Activated CD4-positive, alpha-beta T cell treated with anti-CD3 and anti-CD28 coated beads, Interleukin-2, amount 10 ng/mL, durations not matched to agents 24 days and 14 days (primary cell): ENCODE measurements at regions of chr1 and their contacts with region 1.

Region 1: DNA sequence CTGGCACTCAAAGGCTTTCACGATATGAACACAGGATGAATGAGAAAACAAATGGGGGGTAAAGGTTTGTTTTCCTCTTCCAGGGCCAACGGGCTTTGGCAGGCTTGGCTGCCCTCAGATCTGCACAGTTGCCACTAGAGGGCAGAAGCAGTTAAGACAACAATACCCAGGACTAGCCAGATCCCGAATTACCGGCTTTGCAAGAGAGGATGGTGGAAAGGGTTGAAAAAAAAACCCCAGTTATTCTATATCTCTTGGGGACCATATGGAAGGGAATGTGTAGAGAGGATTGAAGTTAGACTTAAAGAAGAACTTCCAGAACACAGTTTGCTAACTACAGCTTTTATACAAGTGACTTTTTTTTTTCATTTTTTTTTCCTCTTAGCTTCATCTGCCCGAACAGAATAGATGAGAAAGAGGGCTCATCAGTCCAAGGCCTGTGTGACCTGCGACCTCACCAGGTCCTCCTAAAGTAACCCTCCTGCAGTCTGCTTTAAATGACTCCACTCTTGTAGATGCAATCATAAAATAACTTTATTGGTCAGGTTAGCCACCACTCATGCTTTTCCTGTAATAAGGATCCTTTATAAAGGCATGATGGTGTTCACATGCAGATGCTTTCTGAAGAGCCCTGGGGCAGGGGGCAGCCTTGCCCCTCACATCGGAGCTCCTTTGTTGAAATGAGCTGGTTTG is 10.7 kb downstream of the FMOD start:
- DNase-seq: peak; percentile 89
- H3K4me3 Mint-ChIP-seq: no peak overlapping the region
- H3K27ac Mint-ChIP-seq: no peak overlapping the region
- H3K4me1 Mint-ChIP-seq: peaks cover 24% of the 10 kb centered on the region
- H3K27me3 Mint-ChIP-seq: peaks cover 38% of the 10 kb centered on the region

Region 2: DNA sequence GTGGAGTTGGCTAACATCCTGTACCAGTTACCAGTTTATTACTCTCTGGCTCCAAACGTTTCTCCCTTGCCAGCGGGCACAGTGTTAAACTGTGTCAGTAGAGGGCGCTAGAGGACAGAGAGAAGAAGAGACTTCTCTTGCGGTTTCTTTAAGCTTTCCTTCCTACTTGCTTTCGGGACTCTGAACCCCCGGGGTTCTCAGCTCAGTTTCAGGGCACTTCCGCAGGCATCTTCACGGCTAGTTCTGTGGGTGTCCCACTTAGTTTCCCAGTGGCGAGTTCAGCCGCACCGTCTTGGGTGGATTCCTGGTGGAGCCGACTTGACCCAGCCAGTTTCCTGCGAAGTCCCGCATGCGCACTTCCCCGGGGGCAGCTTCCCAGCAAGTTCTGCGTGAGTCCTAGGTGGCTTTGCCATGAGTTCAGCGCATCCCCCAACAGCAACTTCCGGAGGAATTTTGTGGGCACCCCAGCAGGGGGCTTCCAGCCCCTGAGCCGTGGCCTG is 72.9 kb before region 1 on chr1:
- intact Hi-C with region 1: loop called (anchors 1 kb)
- DNase-seq: peak; percentile 96
- H3K4me3 Mint-ChIP-seq: peak overlapping the region; percentile 87
- H3K27ac Mint-ChIP-seq: peak overlapping the region; percentile 76
- H3K4me1 Mint-ChIP-seq: peaks cover 18% of the 10 kb centered on the region
- H3K27me3 Mint-ChIP-seq: peaks cover 4% of the 10 kb centered on the region

Region 3: GRCh38 chr1:203273206-203273868 is 66.9 kb before region 1 on chr1:
- intact Hi-C with region 1: loop called (anchors 1 kb)
- DNase-seq: peak; percentile 97
- H3K4me3 Mint-ChIP-seq: peak overlapping the region; percentile 76
- H3K27ac Mint-ChIP-seq: peak overlapping the region; percentile 87
- H3K4me1 Mint-ChIP-seq: peaks cover 57% of the 10 kb centered on the region
- H3K27me3 Mint-ChIP-seq: no peaks in the 10 kb centered on the region

Region 4: DNA sequence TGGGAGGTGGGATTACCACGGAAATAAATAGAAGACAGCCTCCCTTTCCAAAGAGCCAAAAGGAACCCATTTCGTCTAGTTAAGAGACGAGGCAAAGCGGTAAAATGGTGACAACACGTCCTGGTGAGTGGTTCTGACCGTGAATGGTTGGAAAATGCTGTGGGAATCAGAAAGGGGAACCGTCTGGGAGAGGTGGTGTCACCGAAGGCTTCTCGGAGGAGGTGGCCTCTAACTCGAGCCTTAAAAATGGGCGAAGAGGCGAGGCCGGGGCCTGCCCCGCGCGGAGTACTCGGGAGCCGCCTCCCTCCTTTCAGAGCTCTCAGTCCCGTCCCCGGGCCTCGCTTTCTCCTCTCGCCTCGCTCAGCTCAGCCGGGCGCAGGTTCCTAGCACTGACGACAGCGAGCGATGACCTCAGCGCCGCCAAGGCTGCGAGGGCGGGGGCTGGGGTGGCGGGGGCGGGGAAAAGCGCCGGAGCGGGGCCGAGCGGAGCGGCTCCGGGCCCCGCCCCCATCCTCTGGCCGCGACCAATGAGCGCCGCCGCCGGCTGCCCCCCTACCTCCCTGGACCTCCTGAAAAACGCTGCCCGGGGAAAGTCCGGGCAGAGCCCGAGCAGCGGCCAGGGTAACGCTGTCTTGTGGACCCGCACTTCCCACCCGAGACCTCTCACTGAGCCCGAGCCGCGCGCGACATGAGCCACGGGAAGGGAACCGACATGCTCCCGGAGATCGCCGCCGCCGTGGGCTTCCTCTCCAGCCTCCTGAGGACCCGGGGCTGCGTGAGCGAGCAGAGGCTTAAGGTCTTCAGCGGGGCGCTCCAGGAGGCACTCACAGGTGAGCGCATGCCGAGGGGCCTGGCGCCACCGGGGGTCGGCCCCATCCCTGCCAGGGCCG is 35.1 kb before region 1 on chr1 and contains the start of gene BTG2:
- intact Hi-C with region 1: loop called (anchors 1 kb)
- DNase-seq: peak; percentile 97
- H3K4me3 Mint-ChIP-seq: peak within 1 kb of the TSS; percentile 99
- H3K27ac Mint-ChIP-seq: peak within 1 kb of the TSS; percentile 98
- H3K4me1 Mint-ChIP-seq: peaks cover 62% of the 10 kb centered on the region
- H3K27me3 Mint-ChIP-seq: no peaks in the 10 kb centered on the region
- total RNA-seq, gene BTG2: 106 and 108 TPM in 2 replicates

Region 5: DNA sequence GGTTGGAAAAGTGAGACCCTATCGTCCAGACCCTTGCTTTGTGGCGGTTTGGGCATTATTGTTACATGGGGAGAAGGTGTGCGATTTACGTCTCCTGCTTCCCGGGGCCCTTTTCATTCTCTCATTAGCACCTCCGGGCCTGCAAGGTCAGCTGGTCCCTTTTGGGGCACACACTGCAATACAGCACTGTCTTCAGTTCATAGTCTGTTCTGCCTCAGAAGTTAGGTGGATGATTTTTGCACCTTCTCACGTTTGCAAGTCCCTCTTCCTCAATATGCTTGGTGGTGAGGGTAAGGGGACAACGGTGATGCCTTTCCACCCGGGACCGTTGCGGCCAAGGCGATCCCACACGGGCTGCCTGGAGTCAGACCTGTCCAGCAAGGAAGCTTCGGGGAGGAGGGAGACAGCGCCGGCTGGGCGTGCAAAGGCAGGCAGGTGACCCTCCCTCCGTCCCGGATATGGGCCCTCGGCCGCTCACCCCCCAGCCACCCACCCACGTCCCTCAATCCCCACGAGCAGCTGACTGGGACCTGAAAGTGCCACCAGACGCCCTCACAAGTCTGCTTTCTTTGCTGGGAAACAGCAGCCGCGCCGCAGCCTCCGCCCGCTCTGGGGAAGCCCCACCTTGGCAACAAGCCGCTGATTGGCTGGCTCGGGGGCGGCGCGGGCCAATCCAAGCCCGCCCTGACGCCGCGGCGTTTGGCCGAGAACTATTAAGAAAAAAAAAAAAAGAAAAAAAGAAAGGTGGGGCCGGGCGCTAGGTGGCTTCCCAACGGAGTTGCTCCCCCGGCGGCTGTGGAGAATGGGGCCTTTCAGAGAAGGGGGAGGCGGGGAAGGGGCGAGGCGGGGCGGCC is 13.2 kb before region 1 on chr1:
- intact Hi-C with region 1: loop called (anchors 1 kb)
- DNase-seq: peak; percentile 98
- H3K4me3 Mint-ChIP-seq: peak overlapping the region; percentile 83
- H3K27ac Mint-ChIP-seq: peak overlapping the region; percentile 94
- H3K4me1 Mint-ChIP-seq: peaks cover 61% of the 10 kb centered on the region
- H3K27me3 Mint-ChIP-seq: no peaks in the 10 kb centered on the region

Region 6: DNA sequence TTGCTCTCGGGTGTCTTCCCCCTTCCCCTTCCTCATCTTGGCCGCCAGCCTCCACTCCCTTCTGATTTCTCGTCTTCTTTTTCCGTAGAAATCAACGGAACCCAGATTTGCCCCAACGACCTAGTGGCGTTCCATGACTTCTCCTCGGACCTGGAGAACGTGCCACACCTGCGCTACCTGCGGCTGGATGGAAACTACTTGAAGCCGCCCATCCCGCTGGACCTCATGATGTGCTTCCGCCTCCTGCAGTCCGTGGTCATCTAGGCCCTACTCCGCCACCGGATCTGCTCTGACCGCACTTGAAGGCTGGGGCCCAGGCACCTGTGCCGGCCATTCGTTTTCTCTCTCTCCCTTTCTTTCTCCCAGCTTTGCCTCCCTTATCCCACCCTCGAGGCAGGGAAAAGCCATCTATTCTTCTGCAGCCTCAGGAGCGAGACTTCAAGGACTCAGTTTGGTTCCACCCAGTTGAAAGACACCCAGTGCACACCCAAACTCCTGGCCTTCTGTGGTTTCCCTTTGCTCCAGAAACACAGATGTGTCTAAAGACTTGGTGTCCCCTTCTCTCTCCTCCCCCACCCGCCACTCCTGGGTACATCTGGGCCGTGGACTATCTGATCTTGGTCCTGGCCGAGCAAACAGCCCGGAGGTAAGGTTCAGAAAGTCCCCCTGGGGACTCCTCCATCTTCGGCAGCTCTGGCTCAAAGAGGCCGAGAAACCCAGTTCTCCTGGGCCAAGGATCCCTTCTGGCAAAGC is 146.5 kb after region 1 on chr1:
- intact Hi-C with region 1: loop called (anchors 1 kb)
- DNase-seq: no peak
- H3K4me3 Mint-ChIP-seq: peak overlapping the region; percentile 70
- H3K27ac Mint-ChIP-seq: peak overlapping the region; percentile 50
- H3K4me1 Mint-ChIP-seq: peaks cover 3% of the 10 kb centered on the region
- H3K27me3 Mint-ChIP-seq: peaks cover 3% of the 10 kb centered on the region

Region 7: GRCh38 chr1:203702130-203702577 is 361.9 kb after region 1 on chr1:
- intact Hi-C with region 1: loop called (anchors 10 kb)
- DNase-seq: peak; percentile 88
- H3K4me3 Mint-ChIP-seq: no peak overlapping the region
- H3K27ac Mint-ChIP-seq: peak overlapping the region; percentile 76
- H3K4me1 Mint-ChIP-seq: peaks cover 14% of the 10 kb centered on the region
- H3K27me3 Mint-ChIP-seq: no peaks in the 10 kb centered on the region